Keratinocyte (primary cell): ENCODE measurements at regions of chr20 and their contacts with region 1.

Region 1: DNA sequence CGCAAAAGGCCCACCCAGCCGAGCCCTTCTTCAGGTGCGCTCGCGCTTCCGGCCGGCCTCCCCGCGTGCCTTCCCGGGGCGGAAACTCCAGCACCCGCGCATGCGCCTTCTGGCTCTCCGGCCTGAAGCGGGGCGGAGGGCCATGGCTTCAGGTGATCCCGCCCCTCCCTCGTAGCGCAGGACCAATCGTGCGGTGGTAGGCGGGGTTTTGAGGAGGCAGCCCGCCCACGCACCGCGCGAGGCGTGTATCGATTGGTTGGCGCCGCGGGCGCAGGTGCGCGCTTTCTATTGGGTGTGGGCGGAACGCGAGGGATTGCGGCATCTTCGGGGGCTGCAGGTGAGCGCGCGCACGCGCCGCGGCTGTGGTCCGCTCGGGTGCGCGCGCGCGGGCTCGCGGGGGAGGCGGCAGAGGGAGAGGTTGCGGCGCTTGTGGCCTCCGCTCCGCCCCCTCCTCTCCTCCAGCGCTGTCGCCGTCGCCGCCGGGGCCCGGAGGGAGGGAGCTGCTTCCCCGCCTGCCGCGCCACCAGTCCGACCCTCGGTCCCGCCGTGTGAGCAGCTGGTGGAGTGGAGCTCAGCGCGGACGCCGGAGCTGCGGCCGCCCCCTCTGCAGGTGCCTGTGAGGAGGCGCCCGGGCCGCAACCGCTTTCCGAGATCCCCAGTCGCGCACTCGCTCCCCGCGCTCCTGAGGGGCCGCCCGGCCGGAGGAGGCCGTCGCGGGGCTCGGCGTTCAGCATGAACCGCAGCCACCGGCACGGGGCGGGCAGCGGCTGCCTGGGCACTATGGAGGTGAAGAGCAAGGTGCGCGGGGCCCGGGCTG is at the start of gene PARD6B:
- DNase-seq: peak; percentile 94
- H3K4me3 ChIP-seq: peak within 1 kb of the TSS; percentile 82 to 98 (median 83)
- H3K27ac ChIP-seq: peak within 1 kb of the TSS; percentile 98
- H3K4me1 ChIP-seq: peaks cover 61% of the 10 kb centered on the region
- H3K27me3 ChIP-seq: no peaks in the 10 kb centered on the region
- CTCF ChIP-seq: no peak
- polyA plus RNA-seq, gene PARD6B: 1.4 to 2.0 TPM (median 1.4 TPM) in 3 replicates

Region 2: DNA sequence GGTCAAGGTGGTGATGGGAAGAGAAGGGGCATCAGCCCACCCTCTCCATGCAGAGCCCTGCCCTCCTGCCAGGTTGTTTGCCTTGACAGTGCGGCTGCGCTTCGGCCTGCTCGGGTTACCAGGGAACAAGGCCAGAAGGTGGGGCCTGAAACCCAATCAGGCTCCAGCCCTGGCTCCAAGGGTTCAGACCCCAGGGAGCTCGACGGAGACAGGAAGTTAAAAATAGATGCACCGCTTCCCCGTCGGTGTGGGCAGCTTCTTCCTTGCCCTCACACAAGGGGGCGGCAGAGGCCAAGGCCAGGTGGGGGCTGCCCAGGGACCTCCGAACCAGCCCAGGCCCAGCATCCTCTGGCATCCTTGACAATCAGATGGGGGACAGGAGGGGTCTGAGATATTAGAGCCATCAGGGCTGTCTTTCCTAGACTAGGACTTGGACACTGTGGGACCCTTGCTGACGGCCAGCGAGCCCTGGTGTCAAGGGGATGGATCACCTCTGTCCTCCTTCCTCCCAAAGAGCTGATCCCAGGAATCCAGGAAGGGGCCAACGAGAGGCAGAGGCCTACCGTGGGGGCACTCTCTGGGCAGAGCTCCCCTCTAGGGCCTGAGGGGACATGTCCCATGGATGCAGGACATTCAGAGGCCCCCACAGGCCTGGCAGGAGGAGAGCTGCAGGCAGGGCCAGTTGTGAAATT is 105.1 kb before region 1 on chr20:
- dilution Hi-C with region 1: no loop called
- DNase-seq: no peak
- H3K4me3 ChIP-seq: no peak overlapping the region
- H3K27ac ChIP-seq: no peak overlapping the region
- H3K4me1 ChIP-seq: peaks cover 14% of the 10 kb centered on the region
- H3K27me3 ChIP-seq: peaks cover 4% of the 10 kb centered on the region
- CTCF ChIP-seq: peak; percentile 43 to 67 (median 48)

Region 3: GRCh38 chr20:50636504-50637218 is 94.6 kb before region 1 on chr20:
- dilution Hi-C with region 1: no loop called
- DNase-seq: no peak
- H3K4me3 ChIP-seq: no peak overlapping the region
- H3K27ac ChIP-seq: no peak overlapping the region
- H3K4me1 ChIP-seq: peaks cover 7% of the 10 kb centered on the region
- H3K27me3 ChIP-seq: peaks cover 6% of the 10 kb centered on the region
- CTCF ChIP-seq: no peak

Region 4: GRCh38 chr20:50663095-50663850 is 68.0 kb before region 1 on chr20:
- dilution Hi-C with region 1: loop called (anchors 10 kb)
- DNase-seq: peak; percentile 73
- H3K4me3 ChIP-seq: no peak overlapping the region
- H3K27ac ChIP-seq: no peak overlapping the region
- H3K4me1 ChIP-seq: peaks cover 6% of the 10 kb centered on the region
- H3K27me3 ChIP-seq: no peaks in the 10 kb centered on the region
- CTCF ChIP-seq: peak; percentile 39 to 50 (median 50)

Region 5: DNA sequence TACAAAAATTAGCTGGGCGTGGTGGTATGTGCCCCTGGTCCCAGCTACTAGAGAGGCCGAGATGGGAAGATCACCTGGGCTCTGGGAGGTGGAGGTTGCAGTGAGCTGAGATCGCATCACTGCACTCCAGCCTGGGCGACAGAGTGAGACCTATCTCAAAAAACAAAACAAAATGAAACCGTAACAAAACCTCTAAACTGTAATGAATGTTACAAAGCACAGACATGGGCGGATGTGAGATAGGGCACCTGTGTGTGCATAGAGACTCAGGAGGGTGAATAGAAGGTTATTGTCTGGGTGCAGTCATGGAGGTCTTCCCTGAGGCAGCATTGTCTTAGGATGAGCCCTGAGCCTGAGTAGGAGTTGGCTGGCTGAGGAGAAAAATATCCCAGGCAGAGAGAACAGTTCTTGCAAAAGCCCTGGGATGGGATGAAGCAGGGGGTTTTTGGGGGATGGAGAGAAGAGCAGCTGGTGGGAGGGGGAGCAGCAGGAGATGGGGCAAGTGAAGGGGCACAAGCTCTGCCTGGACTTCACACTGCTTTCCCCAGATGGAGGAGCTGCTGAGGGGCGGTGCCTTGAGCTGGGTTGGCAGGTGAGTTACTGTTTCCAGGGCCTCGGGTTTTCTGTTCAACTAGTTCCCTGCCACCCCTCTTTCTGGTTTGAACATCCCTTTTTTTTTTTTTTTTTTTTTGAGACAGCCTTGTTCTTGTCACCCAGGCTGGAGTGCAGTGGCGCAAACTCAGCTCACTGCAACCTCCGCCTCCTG is 68.8 kb after region 1 on chr20:
- dilution Hi-C with region 1: no loop called
- DNase-seq: no peak
- H3K4me3 ChIP-seq: no peak overlapping the region
- H3K27ac ChIP-seq: no peak overlapping the region
- H3K4me1 ChIP-seq: peaks cover 3% of the 10 kb centered on the region
- H3K27me3 ChIP-seq: no peaks in the 10 kb centered on the region
- CTCF ChIP-seq: no peak